Heart right ventricle (tissue), 16 donors: ENCODE measurements at regions of chr11 and their contacts with region 1.

Region 1: GRCh38 chr11:61803889-61804647 is 11.4 kb downstream of the FEN1 start:
- DNase-seq: no peak
- ATAC-seq: no peak
- H3K4me3 ChIP-seq: no peak overlapping the region
- H3K27ac ChIP-seq: no peak overlapping the region
- H3K4me1 ChIP-seq: peaks cover 0 to 9% (median 0%) of the 10 kb centered on the region in 9 donors
- H3K27me3 ChIP-seq: no peaks in the 10 kb centered on the region
- CTCF ChIP-seq: no peak

Region 2: GRCh38 chr11:61860054-61860903 is 56.2 kb after region 1 on chr11:
- intact Hi-C with region 1: loop called in 1 of 10 experiments (anchors 2 kb)
- DNase-seq: peak; percentile 81 to 83
- ATAC-seq: peak; percentile 45 to 82 (median 72)
- H3K4me3 ChIP-seq: no peak overlapping the region
- H3K27ac ChIP-seq: peak overlapping the region in 8 of 10 donors; percentile 38 to 88 (median 68)
- H3K4me1 ChIP-seq: peaks cover 6 to 27% (median 14%) of the 10 kb centered on the region in 9 donors
- H3K27me3 ChIP-seq: no peaks in the 10 kb centered on the region
- CTCF ChIP-seq: no peak

Region 3: GRCh38 chr11:61899146-61899841 is 95.2 kb after region 1 on chr11:
- intact Hi-C with region 1: loop called in 7 of 10 experiments (anchors 5 to 10 kb)
- DNase-seq: peak; percentile 84 to 88
- ATAC-seq: peak; percentile 67 to 87 (median 82)
- H3K4me3 ChIP-seq: no peak overlapping the region
- H3K27ac ChIP-seq: peak overlapping the region in 6 of 10 donors; percentile 2 to 61 (median 42)
- H3K4me1 ChIP-seq: peaks cover 0 to 22% (median 10%) of the 10 kb centered on the region in 9 donors
- H3K27me3 ChIP-seq: no peaks in the 10 kb centered on the region
- CTCF ChIP-seq: peak; percentile 98 to 100 (median 100)

Region 4: GRCh38 chr11:61967116-61967923 is 163.3 kb after region 1 on chr11 and contains the start of gene FTH1:
- intact Hi-C with region 1: no loop called
- DNase-seq: peak; percentile 92 to 93
- ATAC-seq: peak; percentile 74 to 89 (median 83)
- H3K4me3 ChIP-seq: peak within 1 kb of the TSS; percentile 74 to 97 (median 90)
- H3K27ac ChIP-seq: peak within 1 kb of the TSS; percentile 96 to 100 (median 99)
- H3K4me1 ChIP-seq: peaks cover 23 to 85% (median 76%) of the 10 kb centered on the region in 9 donors
- H3K27me3 ChIP-seq: no peaks in the 10 kb centered on the region
- CTCF ChIP-seq: peak in 1 of 9 donors; percentile 6
- total RNA-seq, gene FTH1: 2,008 to 4,360 (median 2,962) TPM

Region 5: DNA sequence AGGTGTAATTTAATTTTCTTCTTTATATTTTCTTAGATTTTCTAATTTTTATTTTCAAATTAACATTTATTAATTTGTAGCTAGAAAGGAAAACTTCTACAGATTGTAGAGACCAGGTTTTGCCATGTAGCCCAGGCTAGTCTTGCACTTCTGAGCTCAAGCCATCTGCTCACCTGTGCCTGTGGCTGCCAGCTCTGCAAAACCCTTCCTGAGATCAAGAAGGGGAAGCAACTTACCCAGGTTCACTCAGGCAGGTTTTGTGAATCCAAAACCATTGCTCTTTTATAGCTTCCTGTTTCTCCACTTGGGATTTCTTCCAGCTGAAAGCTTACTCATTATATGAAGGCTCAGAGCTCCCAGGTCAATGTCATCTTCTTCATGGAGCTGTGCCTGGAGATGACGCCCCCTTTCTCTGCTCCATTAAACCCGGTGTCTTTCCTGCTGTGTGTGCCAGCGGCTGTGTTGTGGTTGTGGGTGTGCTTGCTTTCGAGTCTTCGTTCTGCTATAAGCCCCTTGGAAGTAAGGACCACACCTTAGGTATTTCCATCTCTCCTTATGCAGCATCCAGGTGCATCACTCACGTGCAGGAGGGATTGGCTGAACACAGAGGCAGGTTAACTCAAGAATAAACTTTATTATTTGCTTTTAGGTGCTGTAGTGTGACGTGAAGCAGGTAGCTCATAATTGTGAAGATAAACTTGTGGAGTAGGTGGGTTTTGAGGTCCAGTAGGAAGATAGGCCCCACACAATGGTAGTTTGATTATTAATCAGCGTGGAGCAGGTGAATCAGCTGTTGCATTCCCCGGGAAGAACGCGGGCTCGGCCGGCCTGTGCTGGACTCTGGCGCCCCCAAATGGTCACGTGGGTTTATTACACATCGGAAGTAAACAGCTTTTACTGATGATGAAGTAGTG is 277.6 kb after region 1 on chr11:
- intact Hi-C with region 1: loop called in 6 of 10 experiments (anchors 5 to 10 kb)
- DNase-seq: peak; percentile 74 to 79
- ATAC-seq: peak; percentile 59 to 92 (median 86)
- H3K4me3 ChIP-seq: no peak overlapping the region
- H3K27ac ChIP-seq: peak overlapping the region in 1 of 10 donors; percentile 16
- H3K4me1 ChIP-seq: peaks cover 0 to 15% (median 0%) of the 10 kb centered on the region in 9 donors
- H3K27me3 ChIP-seq: no peaks in the 10 kb centered on the region
- CTCF ChIP-seq: peak; percentile 86 to 98 (median 94)